Posterior cingulate gyrus (tissue), 11 donors: ENCODE measurements at regions of chr17 and their contacts with region 1.

Region 1: GRCh38 chr17:67800495-67800928 is 24.8 kb upstream of the BPTF start:
- DNase-seq: peak; percentile 34 to 94 (median 66)

Region 2: GRCh38 chr17:67824735-67825626 is 24.5 kb after region 1 on chr17 and contains the start of gene BPTF:
- intact Hi-C with region 1: loop called (anchors 1 kb)
- DNase-seq: peak; percentile 85 to 98 (median 89)